ENCODE measurements at regions of chr6 and their contacts with region 1.

Region 1: DNA sequence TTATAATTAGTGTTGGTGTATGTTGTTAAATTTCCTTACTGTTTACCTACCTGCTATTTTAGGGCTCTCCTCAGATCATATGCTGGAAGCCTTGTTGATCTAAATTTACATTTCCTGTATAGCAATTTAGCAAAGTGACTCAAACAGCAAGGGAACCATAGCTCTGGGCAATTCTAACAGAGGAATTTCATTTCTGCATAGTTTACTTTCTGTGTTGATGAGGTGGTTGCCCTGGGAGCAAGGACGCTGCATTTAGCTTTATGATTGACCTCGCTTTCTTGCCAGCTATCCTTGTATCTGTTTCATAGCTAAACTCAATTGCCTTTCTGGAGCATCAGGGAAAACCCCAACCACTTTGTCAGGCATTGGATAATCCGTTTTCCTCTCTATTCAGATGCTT is 810.8 kb downstream of the GRIK2 start:
- DNase-seq: no peak
- ATAC-seq: no peak
- H3K4me3 ChIP-seq: no peak overlapping the region
- H3K27ac ChIP-seq: no peak overlapping the region
- H3K4me1 ChIP-seq: no peaks in the 10 kb centered on the region
- H3K27me3 ChIP-seq: no peaks in the 10 kb centered on the region
- CTCF ChIP-seq: no peak
- POLR2A ChIP-seq: no peak

Region 2: GRCh38 chr6:101326411-101326810 is 877.9 kb before region 1 on chr6:
- intact Hi-C with region 1: loop called in 1 of 10 experiments (anchors 5 kb)
- DNase-seq: no peak
- ATAC-seq: no peak
- H3K4me3 ChIP-seq: no peak overlapping the region
- H3K27ac ChIP-seq: no peak overlapping the region
- H3K4me1 ChIP-seq: no peaks in the 10 kb centered on the region
- H3K27me3 ChIP-seq: no peaks in the 10 kb centered on the region
- CTCF ChIP-seq: no peak
- POLR2A ChIP-seq: no peak